Naive thymus-derived CD4-positive, alpha-beta T cell (primary cell): ENCODE measurements at regions of chr1 and their contacts with region 1.

Region 1: GRCh38 chr1:156813750-156814570 is 2.7 kb downstream of the SH2D2A start:
- DNase-seq: peak; percentile 54 to 79 (median 70)
- ATAC-seq: peak; percentile 45
- H3K4me3 ChIP-seq: peak overlapping the region; percentile 83
- H3K4me3 Mint-ChIP-seq: peak overlapping the region; percentile 82 to 97 (median 84)
- H3K27ac ChIP-seq: peak overlapping the region; percentile 98
- H3K27ac Mint-ChIP-seq: peak overlapping the region; percentile 90 to 100 (median 99)
- H3K4me1 ChIP-seq: peaks cover 33 to 59% of the 10 kb centered on the region in 2 donors
- H3K4me1 Mint-ChIP-seq: peaks cover 45 to 76% (median 60%) of the 10 kb centered on the region in 7 donors
- H3K27me3 ChIP-seq: no peaks in the 10 kb centered on the region
- H3K27me3 Mint-ChIP-seq: no peaks in the 10 kb centered on the region

Region 2: DNA sequence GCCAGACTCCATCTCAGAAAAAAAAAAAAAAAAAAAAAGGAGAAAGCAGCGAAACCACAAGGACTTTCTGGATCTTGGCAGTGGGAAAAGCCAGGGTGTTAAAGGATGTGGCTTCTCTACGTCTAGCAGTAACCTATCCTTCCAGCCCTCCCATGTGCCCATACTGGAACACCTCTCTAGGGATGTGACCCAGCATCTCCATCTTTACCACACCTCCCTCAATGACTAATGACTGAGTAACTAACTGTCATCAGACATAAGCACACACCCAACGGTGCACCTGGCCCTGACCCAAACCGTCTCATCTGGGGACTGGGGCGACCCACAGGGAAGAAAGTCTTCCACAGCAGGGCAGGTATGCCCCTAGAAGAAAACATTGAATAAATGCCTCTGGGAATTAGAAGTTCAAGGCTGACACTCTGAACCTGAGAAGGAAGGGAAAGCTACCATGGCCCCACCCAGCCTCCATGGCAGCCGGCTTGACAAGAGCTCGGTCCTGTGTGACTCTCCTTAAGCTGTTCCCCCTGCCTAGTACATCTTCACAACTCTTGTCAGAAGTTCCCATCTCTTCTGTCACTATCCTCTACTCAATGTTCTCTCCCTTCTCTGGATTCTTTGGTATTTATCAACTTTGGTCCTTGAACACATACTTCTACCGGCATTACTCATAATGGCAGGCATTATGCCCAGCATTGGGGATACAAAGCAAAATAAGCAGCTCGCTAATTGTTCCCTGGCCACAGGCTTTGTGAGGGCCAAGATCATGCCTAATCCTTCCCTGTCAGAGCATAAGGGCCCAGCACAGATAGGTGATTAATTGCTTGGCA is 551.3 kb before region 1 on chr1:
- CTCF ChIA-PET with region 1: no interaction called
- POLR2A ChIA-PET with region 1: no interaction called
- intact Hi-C with region 1: no loop called
- DNase-seq: no peak
- ATAC-seq: no peak
- H3K4me3 ChIP-seq: no peak overlapping the region
- H3K4me3 Mint-ChIP-seq: no peak overlapping the region
- H3K27ac ChIP-seq: no peak overlapping the region
- H3K27ac Mint-ChIP-seq: peak overlapping the region in 2 of 9 donors; percentile 7 to 56
- H3K4me1 ChIP-seq: no peaks in the 10 kb centered on the region
- H3K4me1 Mint-ChIP-seq: peaks cover 0 to 21% (median 3%) of the 10 kb centered on the region in 7 donors
- H3K27me3 ChIP-seq: no peaks in the 10 kb centered on the region
- H3K27me3 Mint-ChIP-seq: no peaks in the 10 kb centered on the region

Region 3: DNA sequence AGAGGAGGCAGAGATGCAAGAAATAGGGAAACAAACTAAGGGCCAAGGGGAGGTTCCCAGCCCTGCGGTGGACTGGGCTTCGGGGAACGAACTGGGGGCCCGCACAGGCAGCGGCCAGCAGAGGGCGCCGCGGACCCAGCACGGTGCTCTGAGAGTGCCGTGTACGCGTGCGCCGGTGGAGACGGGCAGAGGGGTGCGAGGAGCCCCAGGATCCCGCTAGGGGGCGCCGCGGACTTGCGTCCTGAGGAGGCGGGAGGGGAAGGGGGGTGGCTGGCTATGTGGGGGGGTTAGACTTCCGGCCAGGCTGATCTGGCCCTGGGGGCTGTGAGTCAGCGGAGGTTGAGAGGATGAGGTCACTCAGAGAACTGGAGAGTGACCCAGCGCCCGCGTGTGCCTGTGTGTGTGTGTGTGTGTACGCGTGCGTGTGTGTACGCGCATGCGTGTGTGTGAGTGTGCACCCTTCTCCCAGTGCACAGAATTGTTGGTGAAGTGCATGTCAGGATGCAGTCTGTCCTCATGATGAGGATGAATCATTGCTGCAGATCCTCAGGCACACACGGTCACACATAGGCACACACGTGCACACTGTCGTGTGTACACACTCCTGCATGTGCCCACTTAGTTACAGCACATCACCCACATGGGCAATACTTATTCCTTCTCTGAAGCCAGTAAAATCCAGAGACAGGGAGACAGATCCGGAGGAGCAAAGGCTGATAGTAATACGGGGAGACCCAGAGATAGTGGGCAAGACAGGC is 153.8 kb before region 1 on chr1:
- CTCF ChIA-PET with region 1: no interaction called
- POLR2A ChIA-PET with region 1: no interaction called
- intact Hi-C with region 1: no loop called
- DNase-seq: peak; percentile 82 to 96 (median 89)
- ATAC-seq: peak; percentile 95
- H3K4me3 ChIP-seq: no peak overlapping the region
- H3K4me3 Mint-ChIP-seq: peak overlapping the region in 9 of 10 donors; percentile 4 to 90 (median 48)
- H3K27ac ChIP-seq: no peak overlapping the region
- H3K27ac Mint-ChIP-seq: peak overlapping the region in 8 of 9 donors; percentile 53 to 87 (median 69)
- H3K4me1 ChIP-seq: peaks cover 32 to 39% of the 10 kb centered on the region in 2 donors
- H3K4me1 Mint-ChIP-seq: peaks cover 33 to 62% (median 44%) of the 10 kb centered on the region in 7 donors
- H3K27me3 ChIP-seq: peaks cover 0 to 13% of the 10 kb centered on the region in 2 donors
- H3K27me3 Mint-ChIP-seq: peaks cover 18 to 30% (median 24%) of the 10 kb centered on the region in 5 donors

Region 4: GRCh38 chr1:156740679-156741612 is 73.0 kb before region 1 on chr1 and contains the start of gene MRPL24:
- CTCF ChIA-PET with region 1: no interaction called
- POLR2A ChIA-PET with region 1: interaction called, 3 read pairs
- intact Hi-C with region 1: loop called (anchors 1 kb)
- DNase-seq: peak; percentile 84 to 99 (median 98)
- ATAC-seq: peak; percentile 95
- H3K4me3 ChIP-seq: peak within 1 kb of the TSS; percentile 79
- H3K4me3 Mint-ChIP-seq: peak within 1 kb of the TSS; percentile 94 to 99 (median 98)
- H3K27ac ChIP-seq: peak within 1 kb of the TSS; percentile 90
- H3K27ac Mint-ChIP-seq: peak within 1 kb of the TSS; percentile 86 to 99 (median 98)
- H3K4me1 ChIP-seq: peaks cover 17 to 20% of the 10 kb centered on the region in 2 donors
- H3K4me1 Mint-ChIP-seq: peaks cover 23 to 50% (median 40%) of the 10 kb centered on the region in 7 donors
- H3K27me3 ChIP-seq: no peaks in the 10 kb centered on the region
- H3K27me3 Mint-ChIP-seq: no peaks in the 10 kb centered on the region
- total RNA-seq, gene MRPL24: 19.1 to 68.9 (median 47.2) TPM

Region 5: DNA sequence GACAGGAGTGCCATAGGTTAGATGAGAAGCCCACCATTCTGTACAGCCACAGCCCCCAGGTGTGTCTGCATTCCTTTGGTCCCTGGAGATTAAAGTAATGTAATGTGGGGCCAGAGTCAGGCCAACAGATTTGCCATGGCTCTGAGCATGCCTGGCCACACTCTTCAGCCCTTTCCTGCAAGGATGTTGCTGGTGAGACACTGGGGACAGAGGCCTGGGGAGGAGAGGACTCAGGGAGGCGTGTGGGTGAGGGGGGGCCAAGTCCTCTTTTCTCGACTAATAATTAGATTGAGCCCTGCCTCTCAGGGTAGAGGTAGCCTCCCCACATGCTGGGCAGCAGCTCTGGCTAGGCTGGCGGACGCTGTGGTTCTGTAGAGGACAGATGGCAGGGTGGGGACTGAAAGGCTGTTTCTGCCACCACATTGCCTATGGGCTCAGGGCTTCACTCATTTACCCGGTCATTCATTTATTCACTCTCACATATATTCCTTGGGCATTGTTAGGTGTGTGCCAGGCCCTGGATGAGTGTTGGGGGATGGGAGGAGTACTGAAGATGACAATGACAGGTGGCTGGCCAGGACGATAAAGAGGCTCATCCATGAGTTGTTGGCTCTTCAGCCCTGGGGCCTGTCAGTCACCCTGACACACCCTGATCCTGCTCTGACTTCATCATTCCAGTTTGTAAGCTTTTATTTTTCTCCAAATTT is 53.7 kb before region 1 on chr1:
- CTCF ChIA-PET with region 1: no interaction called
- POLR2A ChIA-PET with region 1: no interaction called
- intact Hi-C with region 1: no loop called
- DNase-seq: no peak
- ATAC-seq: no peak
- H3K4me3 ChIP-seq: no peak overlapping the region
- H3K4me3 Mint-ChIP-seq: no peak overlapping the region
- H3K27ac ChIP-seq: no peak overlapping the region
- H3K27ac Mint-ChIP-seq: no peak overlapping the region
- H3K4me1 ChIP-seq: no peaks in the 10 kb centered on the region
- H3K4me1 Mint-ChIP-seq: peaks cover 0 to 10% (median 4%) of the 10 kb centered on the region in 7 donors
- H3K27me3 ChIP-seq: no peaks in the 10 kb centered on the region
- H3K27me3 Mint-ChIP-seq: no peaks in the 10 kb centered on the region

Region 6: GRCh38 chr1:156797212-156797871 is 16.6 kb before region 1 on chr1:
- CTCF ChIA-PET with region 1: interaction called, 4 read pairs
- POLR2A ChIA-PET with region 1: interaction called, 6 read pairs
- intact Hi-C with region 1: loop called (anchors 1 to 2 kb)
- DNase-seq: peak in 8 of 9 donors; percentile 47 to 76 (median 66)
- ATAC-seq: peak; percentile 89
- H3K4me3 ChIP-seq: no peak overlapping the region
- H3K4me3 Mint-ChIP-seq: no peak overlapping the region
- H3K27ac ChIP-seq: no peak overlapping the region
- H3K27ac Mint-ChIP-seq: peak overlapping the region in 5 of 9 donors; percentile 0 to 49 (median 18)
- H3K4me1 ChIP-seq: no peaks in the 10 kb centered on the region
- H3K4me1 Mint-ChIP-seq: peaks cover 0 to 24% (median 8%) of the 10 kb centered on the region in 7 donors
- H3K27me3 ChIP-seq: no peaks in the 10 kb centered on the region
- H3K27me3 Mint-ChIP-seq: no peaks in the 10 kb centered on the region

Region 7: GRCh38 chr1:156838981-156839410 is 25.0 kb after region 1 on chr1:
- CTCF ChIA-PET with region 1: interaction called, 8 read pairs
- POLR2A ChIA-PET with region 1: interaction called, 3 read pairs
- intact Hi-C with region 1: loop called (anchors 1 to 2 kb)
- DNase-seq: peak in 8 of 9 donors; percentile 30 to 74 (median 50)
- ATAC-seq: peak; percentile 75
- H3K4me3 ChIP-seq: no peak overlapping the region
- H3K4me3 Mint-ChIP-seq: peak overlapping the region in 1 of 10 donors; percentile 34
- H3K27ac ChIP-seq: no peak overlapping the region
- H3K27ac Mint-ChIP-seq: peak overlapping the region in 3 of 9 donors; percentile 47 to 81 (median 48)
- H3K4me1 ChIP-seq: peaks cover 0 to 8% of the 10 kb centered on the region in 2 donors
- H3K4me1 Mint-ChIP-seq: peaks cover 1 to 52% (median 2%) of the 10 kb centered on the region in 7 donors
- H3K27me3 ChIP-seq: no peaks in the 10 kb centered on the region
- H3K27me3 Mint-ChIP-seq: peaks cover 24 to 43% (median 33%) of the 10 kb centered on the region in 5 donors

Region 8: GRCh38 chr1:156848461-156849150 is 34.6 kb after region 1 on chr1:
- CTCF ChIA-PET with region 1: interaction called, 4 read pairs
- POLR2A ChIA-PET with region 1: no interaction called
- intact Hi-C with region 1: loop called in 1 of 2 experiments (anchors 1 kb)
- DNase-seq: peak; percentile 36 to 66 (median 60)
- ATAC-seq: peak; percentile 83
- H3K4me3 ChIP-seq: peak overlapping the region; percentile 47
- H3K4me3 Mint-ChIP-seq: peak overlapping the region; percentile 57 to 80 (median 65)
- H3K27ac ChIP-seq: no peak overlapping the region
- H3K27ac Mint-ChIP-seq: peak overlapping the region in 6 of 9 donors; percentile 44 to 86 (median 74)
- H3K4me1 ChIP-seq: peaks cover 0 to 19% of the 10 kb centered on the region in 2 donors
- H3K4me1 Mint-ChIP-seq: peaks cover 10 to 43% (median 34%) of the 10 kb centered on the region in 7 donors
- H3K27me3 ChIP-seq: peaks cover 0 to 3% of the 10 kb centered on the region in 2 donors
- H3K27me3 Mint-ChIP-seq: peaks cover 8 to 43% (median 27%) of the 10 kb centered on the region in 5 donors

Region 9: DNA sequence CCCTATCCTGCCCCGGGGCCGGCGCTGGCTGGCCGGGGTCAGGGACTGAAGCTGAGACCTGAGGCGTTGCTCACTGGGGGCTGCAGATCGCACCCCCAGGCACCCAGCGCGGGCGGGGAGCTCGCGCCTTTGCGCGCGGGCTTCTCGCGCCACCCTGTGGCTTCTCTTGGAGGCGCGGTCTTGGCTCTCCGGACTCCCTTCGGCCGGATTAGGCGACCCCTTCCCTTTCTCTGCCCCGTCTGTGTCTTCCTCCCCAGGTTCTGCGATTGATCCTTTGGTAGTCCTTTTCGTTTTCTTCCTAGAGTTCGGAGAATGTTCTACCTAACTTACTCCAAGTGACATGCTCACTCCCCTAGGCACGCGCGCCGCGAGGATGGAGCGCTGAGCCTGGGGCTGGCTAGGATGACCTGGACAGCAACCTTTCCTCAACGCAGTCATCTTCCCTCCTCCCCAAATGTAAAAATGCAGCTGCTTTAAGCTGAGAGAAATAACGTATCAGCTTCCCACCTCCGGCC is 46.2 kb after region 1 on chr1:
- CTCF ChIA-PET with region 1: interaction called, 12 read pairs
- POLR2A ChIA-PET with region 1: interaction called, 4 read pairs
- intact Hi-C with region 1: loop called (anchors 1 kb)
- DNase-seq: peak; percentile 21 to 77 (median 45)
- ATAC-seq: peak; percentile 71
- H3K4me3 ChIP-seq: peak overlapping the region; percentile 68
- H3K4me3 Mint-ChIP-seq: peak overlapping the region; percentile 70 to 92 (median 83)
- H3K27ac ChIP-seq: no peak overlapping the region
- H3K27ac Mint-ChIP-seq: peak overlapping the region in 5 of 9 donors; percentile 13 to 73 (median 59)
- H3K4me1 ChIP-seq: peaks cover 5 to 20% of the 10 kb centered on the region in 2 donors
- H3K4me1 Mint-ChIP-seq: peaks cover 17 to 64% (median 24%) of the 10 kb centered on the region in 7 donors
- H3K27me3 ChIP-seq: peaks cover 12 to 31% of the 10 kb centered on the region in 2 donors
- H3K27me3 Mint-ChIP-seq: peaks cover 43 to 53% (median 51%) of the 10 kb centered on the region in 5 donors

Region 10: DNA sequence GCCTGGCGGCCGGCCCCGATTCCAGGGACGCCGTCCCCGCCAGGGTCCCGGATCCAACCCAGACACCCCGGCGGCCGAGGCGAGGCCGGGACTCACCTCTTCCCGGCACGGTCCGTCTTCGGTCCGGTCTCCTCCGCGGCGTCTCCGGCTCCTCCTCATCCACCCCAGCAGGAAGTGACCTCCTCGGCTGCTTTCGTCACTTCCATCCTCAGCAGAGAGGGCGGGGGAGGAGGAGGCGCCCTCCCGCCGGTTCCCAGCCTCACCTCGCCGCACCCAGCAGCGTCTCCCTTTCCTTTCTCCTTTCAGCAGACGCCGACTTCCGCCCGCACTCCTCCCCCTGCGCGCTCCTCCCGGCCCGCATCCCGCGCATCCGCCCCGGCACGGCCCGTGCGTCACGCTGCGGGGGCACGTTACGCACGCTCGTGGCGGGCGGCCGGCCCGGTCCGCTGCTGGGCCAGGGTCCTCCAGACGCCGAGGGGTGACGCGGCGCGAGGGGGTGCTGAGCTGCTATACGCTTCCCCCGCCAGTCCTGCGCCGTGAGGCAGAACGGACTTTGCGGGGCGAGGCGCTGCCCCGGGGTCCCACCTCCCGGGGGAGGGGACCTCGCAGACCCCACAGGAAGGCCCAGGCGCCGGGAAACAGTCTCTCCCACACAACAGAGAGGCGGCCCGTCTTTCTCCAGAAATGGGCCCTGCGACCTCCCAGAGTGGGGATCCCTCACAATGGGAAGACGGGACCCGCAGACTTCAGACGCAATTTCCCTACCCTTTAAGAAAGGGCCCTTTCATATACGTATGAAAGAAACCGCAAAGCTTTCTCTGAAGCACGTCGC is 324.5 kb after region 1 on chr1 and contains the start of gene ETV3:
- CTCF ChIA-PET with region 1: no interaction called
- POLR2A ChIA-PET with region 1: no interaction called
- intact Hi-C with region 1: loop called in 1 of 2 experiments (anchors 5 kb)
- DNase-seq: peak; percentile 65 to 90 (median 87)
- ATAC-seq: peak; percentile 87
- H3K4me3 ChIP-seq: peak within 1 kb of the TSS; percentile 84
- H3K4me3 Mint-ChIP-seq: peak within 1 kb of the TSS; percentile 90 to 97 (median 95)
- H3K27ac ChIP-seq: peak within 1 kb of the TSS; percentile 96
- H3K27ac Mint-ChIP-seq: peak within 1 kb of the TSS; percentile 83 to 98 (median 95)
- H3K4me1 ChIP-seq: peaks cover 43 to 48% of the 10 kb centered on the region in 2 donors
- H3K4me1 Mint-ChIP-seq: peaks cover 41 to 65% (median 57%) of the 10 kb centered on the region in 7 donors
- H3K27me3 ChIP-seq: no peaks in the 10 kb centered on the region
- H3K27me3 Mint-ChIP-seq: no peaks in the 10 kb centered on the region
- total RNA-seq, gene ETV3: 31.5 to 72.4 (median 53.3) TPM